ENCODE measurements at regions of chr13 and their contacts with region 1.

Region 1: DNA sequence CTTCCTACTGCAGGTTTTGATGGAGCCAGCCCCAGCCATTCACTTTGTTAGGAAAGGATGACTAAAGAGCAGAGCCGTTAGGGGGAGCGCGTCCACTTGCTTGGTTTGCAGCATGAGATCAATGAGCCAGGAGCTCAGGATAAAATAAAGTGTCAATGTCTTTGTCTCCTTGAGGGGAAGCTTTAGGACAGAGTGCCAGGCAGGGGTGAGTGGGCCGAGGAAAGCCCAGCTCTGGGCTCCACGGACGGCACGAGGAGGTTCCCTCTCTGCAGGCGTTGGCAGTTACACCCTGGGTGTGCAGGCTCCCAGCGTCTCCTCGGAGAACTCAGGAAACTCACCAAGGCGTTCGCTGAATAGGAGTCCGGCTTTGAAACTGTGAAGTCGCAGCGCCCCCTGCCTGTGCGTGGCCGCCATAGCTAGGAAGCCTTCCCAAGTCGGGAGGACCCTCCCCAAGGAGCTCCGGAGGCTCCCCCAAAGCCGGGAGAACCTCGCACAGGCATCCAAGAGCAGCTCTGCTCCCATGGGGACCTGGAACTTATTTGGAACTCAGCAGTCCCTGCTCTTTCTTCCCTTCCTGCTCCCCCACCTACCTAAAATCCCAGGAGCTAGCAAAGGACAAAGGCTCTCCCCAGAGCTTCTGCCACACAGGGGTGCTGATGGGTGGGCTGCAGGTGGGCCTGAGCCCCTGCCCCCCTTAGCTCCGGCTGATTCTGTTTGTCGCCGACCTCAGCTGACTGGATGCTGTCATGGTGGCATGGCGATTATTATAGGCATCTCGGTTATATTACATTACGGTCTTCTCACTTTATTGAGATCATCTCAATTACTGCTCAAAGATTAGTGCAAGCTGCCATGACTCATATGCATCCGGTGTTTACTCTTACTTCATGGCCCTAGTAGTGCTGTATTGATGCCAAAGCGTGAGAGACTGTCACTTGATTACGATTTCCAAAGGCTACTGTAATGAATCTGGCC is 34.4 kb downstream of the GSX1 start:
- DNase-seq: peak; percentile 78 to 99
- H3K4me3 ChIP-seq: peak overlapping the region in 3 of 4 experiments; percentile 31 to 52 (median 40); a peak in 4 of 8 replicates
- H3K27ac ChIP-seq: no peak overlapping the region
- H3K4me1 ChIP-seq: peaks cover 7 to 19% (median 11%) of the 10 kb centered on the region in 4 experiments; a peak in 6 of 7 replicates
- H3K27me3 ChIP-seq: peaks cover 47 to 91% (median 78%) of the 10 kb centered on the region in 4 experiments
- CTCF ChIP-seq: peak; percentile 77 to 96 (median 95)
- EP300 ChIP-seq: no peak
- POLR2A ChIP-seq: no peak
- RAD21 ChIP-seq: peak; percentile 94 to 96

Region 2: DNA sequence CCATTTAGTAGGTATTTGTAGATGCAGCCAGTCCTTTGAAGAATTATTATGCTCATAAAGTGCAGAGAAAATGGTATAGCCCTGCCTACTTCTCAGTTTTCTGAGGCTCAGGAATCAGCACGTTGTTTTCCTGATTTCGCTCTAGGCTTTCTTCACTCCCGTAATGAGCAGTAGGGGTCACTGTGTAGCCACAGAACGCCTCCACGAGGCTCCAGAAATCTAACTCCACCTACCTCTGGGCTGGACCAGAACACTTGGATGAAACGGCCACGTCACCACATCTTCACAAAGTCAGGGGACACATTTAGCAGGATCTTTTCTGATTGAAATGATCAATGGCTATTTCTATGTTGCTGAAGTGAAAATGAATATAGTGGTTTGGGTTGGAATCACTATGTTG is 452.0 kb before region 1 on chr13:
- CTCF ChIA-PET with region 1: interaction called, 19 read pairs
- POLR2A ChIA-PET with region 1: no interaction called
- DNase-seq: no peak
- H3K4me3 ChIP-seq: no peak overlapping the region
- H3K27ac ChIP-seq: no peak overlapping the region
- H3K4me1 ChIP-seq: peaks cover 0 to 5% (median 3%) of the 10 kb centered on the region in 4 experiments; a peak in 2 of 7 replicates
- H3K27me3 ChIP-seq: peaks cover 0 to 3% (median 1%) of the 10 kb centered on the region in 4 experiments; a peak in 2 of 7 replicates
- CTCF ChIP-seq: peak; percentile 46 to 85 (median 82)
- EP300 ChIP-seq: no peak
- POLR2A ChIP-seq: no peak
- RAD21 ChIP-seq: peak; percentile 87 to 88

Region 3: DNA sequence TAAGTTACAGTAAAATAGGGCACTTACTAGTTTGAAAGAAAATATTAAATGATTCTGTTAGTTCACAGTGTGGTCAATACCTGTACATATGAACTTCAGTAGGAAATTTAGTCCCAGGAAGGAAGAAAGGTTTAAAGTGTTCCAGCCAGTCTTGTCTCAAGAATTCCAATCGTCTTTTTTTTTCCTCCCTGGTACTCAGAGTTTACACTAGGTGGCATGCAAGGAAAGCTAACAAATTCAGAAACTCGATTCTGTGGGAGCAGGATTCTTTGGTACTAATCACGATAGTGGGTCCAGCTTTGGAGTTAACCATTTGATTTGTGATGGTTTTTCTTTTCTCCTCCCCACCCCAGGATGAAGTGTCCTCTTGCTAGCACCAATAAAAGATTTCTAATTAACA is 161.3 kb before region 1 on chr13:
- CTCF ChIA-PET with region 1: interaction called, 112 read pairs
- POLR2A ChIA-PET with region 1: no interaction called
- DNase-seq: no peak
- H3K4me3 ChIP-seq: no peak overlapping the region
- H3K27ac ChIP-seq: no peak overlapping the region
- H3K4me1 ChIP-seq: peaks cover 0 to 3% (median 0%) of the 10 kb centered on the region in 4 experiments; a peak in 2 of 7 replicates
- H3K27me3 ChIP-seq: no peaks in the 10 kb centered on the region
- CTCF ChIP-seq: peak in 2 of 3 experiments; percentile 43 to 49; a peak in 2 of 4 replicates
- EP300 ChIP-seq: no peak
- POLR2A ChIP-seq: no peak
- RAD21 ChIP-seq: peak; percentile 68 to 77

Region 4: GRCh38 chr13:27751953-27752525 is 74.6 kb before region 1 on chr13:
- CTCF ChIA-PET with region 1: interaction called, 29 read pairs
- POLR2A ChIA-PET with region 1: no interaction called
- DNase-seq: no peak
- H3K4me3 ChIP-seq: no peak overlapping the region
- H3K27ac ChIP-seq: no peak overlapping the region
- H3K4me1 ChIP-seq: peaks cover 0 to 8% (median 2%) of the 10 kb centered on the region in 4 experiments; a peak in 2 of 7 replicates
- H3K27me3 ChIP-seq: no peaks in the 10 kb centered on the region
- CTCF ChIP-seq: no peak
- EP300 ChIP-seq: no peak
- POLR2A ChIP-seq: no peak
- RAD21 ChIP-seq: no peak

Region 5: DNA sequence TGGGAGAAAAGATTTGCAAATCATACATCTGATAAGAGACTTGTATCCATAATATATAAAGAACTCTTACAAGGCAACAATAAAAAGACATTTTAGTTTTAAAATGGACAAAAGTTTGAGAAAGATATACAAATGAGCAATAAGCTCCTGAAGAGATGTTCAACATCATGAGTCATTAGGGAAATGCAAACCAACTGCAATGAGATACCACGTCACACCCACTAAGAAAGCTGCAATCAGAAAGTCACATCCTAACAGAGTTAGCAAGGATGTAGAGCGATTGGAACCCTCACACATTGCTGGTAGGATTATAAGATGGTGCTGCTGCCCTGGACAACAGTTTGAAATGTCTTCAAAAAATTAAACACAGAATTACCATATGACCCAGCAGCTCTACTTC is 15.9 kb after region 1 on chr13:
- CTCF ChIA-PET with region 1: interaction called, 23 read pairs
- POLR2A ChIA-PET with region 1: interaction called, 3 read pairs
- DNase-seq: no peak
- H3K4me3 ChIP-seq: no peak overlapping the region
- H3K27ac ChIP-seq: no peak overlapping the region
- H3K4me1 ChIP-seq: no peaks in the 10 kb centered on the region
- H3K27me3 ChIP-seq: no peaks in the 10 kb centered on the region; a peak in 1 of 7 replicates
- CTCF ChIP-seq: no peak
- EP300 ChIP-seq: no peak
- POLR2A ChIP-seq: no peak
- RAD21 ChIP-seq: no peak

Region 6: GRCh38 chr13:27926644-27927434 is 100.2 kb after region 1 on chr13:
- CTCF ChIA-PET with region 1: interaction called, 13 read pairs
- POLR2A ChIA-PET with region 1: interaction called, 3 read pairs
- DNase-seq: peak in 1 of 2 experiments; percentile 55
- H3K4me3 ChIP-seq: no peak overlapping the region
- H3K27ac ChIP-seq: no peak overlapping the region
- H3K4me1 ChIP-seq: peaks cover 0 to 18% (median 14%) of the 10 kb centered on the region in 4 experiments; a peak in 5 of 7 replicates
- H3K27me3 ChIP-seq: peaks cover 97 to 100% (median 99%) of the 10 kb centered on the region in 4 experiments
- CTCF ChIP-seq: no peak
- EP300 ChIP-seq: no peak
- POLR2A ChIP-seq: no peak
- RAD21 ChIP-seq: no peak

Region 7: GRCh38 chr13:27977476-27978300 is 151.0 kb after region 1 on chr13:
- CTCF ChIA-PET with region 1: interaction called, 170 read pairs
- POLR2A ChIA-PET with region 1: interaction called, 3 read pairs
- DNase-seq: peak in 1 of 2 experiments; percentile 72
- H3K4me3 ChIP-seq: peak overlapping the region in 1 of 4 experiments; percentile 28; a peak in 1 of 8 replicates
- H3K27ac ChIP-seq: no peak overlapping the region
- H3K4me1 ChIP-seq: peaks cover 0 to 13% (median 5%) of the 10 kb centered on the region in 4 experiments; a peak in 5 of 7 replicates
- H3K27me3 ChIP-seq: peaks cover 97 to 100% (median 100%) of the 10 kb centered on the region in 4 experiments
- CTCF ChIP-seq: no peak
- EP300 ChIP-seq: peak in 1 of 2 experiments; percentile 50; a peak in 1 of 3 replicates
- POLR2A ChIP-seq: no peak
- RAD21 ChIP-seq: no peak

Region 8: DNA sequence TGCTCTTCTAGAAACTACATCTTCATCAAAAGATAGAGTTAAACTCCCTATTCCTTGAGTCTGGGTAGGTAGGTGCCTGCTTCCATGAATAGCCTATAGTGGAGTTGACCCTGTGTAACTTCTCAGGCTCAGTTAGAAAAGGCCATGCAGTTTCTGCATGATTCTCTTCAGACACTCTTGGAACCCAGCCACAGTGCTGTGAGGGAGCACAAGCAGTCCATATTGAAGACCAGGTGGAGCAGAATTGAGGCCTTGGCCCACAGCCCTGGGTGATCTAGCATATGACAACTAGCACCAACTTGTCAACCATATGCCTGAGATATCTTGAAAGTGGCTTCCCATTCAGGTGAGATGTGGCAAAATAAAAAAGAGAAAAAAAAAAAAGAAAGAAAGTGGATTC is 301.4 kb after region 1 on chr13:
- CTCF ChIA-PET with region 1: no interaction called
- POLR2A ChIA-PET with region 1: no interaction called
- DNase-seq: no peak
- H3K4me3 ChIP-seq: no peak overlapping the region
- H3K27ac ChIP-seq: no peak overlapping the region
- H3K4me1 ChIP-seq: no peaks in the 10 kb centered on the region
- H3K27me3 ChIP-seq: no peaks in the 10 kb centered on the region
- CTCF ChIP-seq: no peak
- EP300 ChIP-seq: no peak
- POLR2A ChIP-seq: no peak
- RAD21 ChIP-seq: no peak